Panc1 (cell line): ENCODE measurements at regions of chr9 and their contacts with region 1.

Region 1: DNA sequence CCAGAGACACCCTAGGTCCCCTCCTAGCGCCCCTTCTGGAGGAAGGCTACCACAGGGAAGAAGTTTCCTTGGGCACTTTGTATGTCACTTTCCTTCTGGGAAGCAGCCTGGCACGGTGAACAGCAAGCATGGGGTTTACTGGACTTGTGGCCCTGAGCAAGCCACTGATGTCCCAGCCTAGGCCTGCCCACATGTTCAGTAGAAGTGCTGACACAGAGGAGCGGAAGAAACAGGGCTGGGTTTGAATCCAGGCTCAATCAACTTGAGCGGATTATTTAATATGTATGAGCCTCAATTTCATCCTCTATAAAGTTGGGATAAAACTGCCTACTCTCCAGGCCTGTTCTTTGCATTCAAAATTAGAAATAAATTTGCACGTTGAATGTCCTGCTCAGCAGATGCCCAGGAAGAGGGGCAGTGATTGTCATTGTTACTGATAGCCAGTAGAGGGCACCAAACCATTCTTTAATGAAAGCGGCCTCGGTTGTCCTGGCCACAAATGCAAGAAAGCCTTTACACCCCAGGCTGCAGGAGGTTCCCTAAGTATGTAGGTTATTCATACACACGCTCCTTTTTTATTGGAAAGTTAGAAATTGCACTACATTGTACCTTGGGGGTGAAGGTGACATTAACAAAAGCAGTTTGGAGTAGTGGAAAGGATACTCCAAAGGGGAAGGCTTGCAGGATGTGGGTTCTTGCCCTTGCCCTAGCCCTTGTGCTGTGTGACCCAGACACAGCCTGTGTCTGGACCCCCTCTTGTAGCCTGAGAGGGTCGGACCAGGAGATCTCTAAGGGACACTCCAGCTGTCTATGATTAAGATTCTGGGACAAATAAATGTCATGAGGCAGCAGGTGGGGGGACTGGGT is 13.4 kb upstream of the XPA start:
- DNase-seq: no peak
- ATAC-seq: peak; percentile 94
- H3K4me3 ChIP-seq: no peak overlapping the region
- H3K27ac ChIP-seq: no peak overlapping the region
- H3K4me1 ChIP-seq: no peaks in the 10 kb centered on the region
- H3K27me3 ChIP-seq: no peaks in the 10 kb centered on the region
- CTCF ChIP-seq: peak; percentile 79

Region 2: GRCh38 chr9:97900738-97901565 is 190.4 kb after region 1 on chr9:
- CTCF ChIA-PET with region 1: no interaction called
- POLR2A ChIA-PET with region 1: no interaction called
- in situ Hi-C with region 1: no loop called
- intact Hi-C with region 1: loop called (anchors 1 kb)
- DNase-seq: no peak
- ATAC-seq: no peak
- H3K4me3 ChIP-seq: no peak overlapping the region
- H3K27ac ChIP-seq: no peak overlapping the region
- H3K4me1 ChIP-seq: no peaks in the 10 kb centered on the region
- H3K27me3 ChIP-seq: no peaks in the 10 kb centered on the region
- CTCF ChIP-seq: peak; percentile 79